ENCODE measurements at regions of chr7 and their contacts with region 1.

Region 1: GRCh38 chr7:50142425-50143017 is 49.5 kb upstream of the ZPBP start:
- DNase-seq: peak; percentile 82
- H3K4me3 Mint-ChIP-seq: peak overlapping the region; percentile 57
- H3K27ac Mint-ChIP-seq: peak overlapping the region; percentile 67
- H3K4me1 Mint-ChIP-seq: peaks cover 31% of the 10 kb centered on the region
- H3K27me3 Mint-ChIP-seq: peaks cover 14% of the 10 kb centered on the region

Region 2: GRCh38 chr7:50125766-50126165 is 16.8 kb before region 1 on chr7:
- intact Hi-C with region 1: no loop called
- DNase-seq: no peak
- H3K4me3 Mint-ChIP-seq: no peak overlapping the region
- H3K27ac Mint-ChIP-seq: no peak overlapping the region
- H3K4me1 Mint-ChIP-seq: peaks cover 3% of the 10 kb centered on the region
- H3K27me3 Mint-ChIP-seq: peaks cover 20% of the 10 kb centered on the region

Region 3: DNA sequence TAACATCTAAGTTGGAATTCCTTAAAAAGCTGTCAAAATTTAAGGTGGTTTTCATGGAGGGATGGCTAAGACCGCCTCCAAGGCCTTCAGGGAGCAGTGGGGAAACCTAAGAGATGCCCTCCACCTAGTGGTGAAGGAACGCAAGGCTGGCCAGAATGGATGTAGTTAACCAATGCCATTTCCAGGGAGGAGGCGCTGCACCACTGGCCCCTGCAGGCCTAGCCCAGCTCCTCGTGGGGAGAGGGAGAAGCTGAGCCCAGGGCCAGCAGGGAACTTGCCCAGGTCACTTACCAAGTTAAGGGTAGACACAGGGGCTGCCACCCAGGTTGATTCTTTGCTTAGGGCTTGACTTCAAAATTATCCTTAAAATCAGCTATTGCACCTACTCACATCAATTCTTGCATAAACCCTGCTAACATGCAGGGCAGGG is 275.6 kb after region 1 on chr7:
- intact Hi-C with region 1: loop called (anchors 1 kb)
- DNase-seq: peak; percentile 92
- H3K4me3 Mint-ChIP-seq: no peak overlapping the region
- H3K27ac Mint-ChIP-seq: no peak overlapping the region
- H3K4me1 Mint-ChIP-seq: peaks cover 31% of the 10 kb centered on the region
- H3K27me3 Mint-ChIP-seq: no peaks in the 10 kb centered on the region